Psoas muscle (tissue), 8 donors: ENCODE measurements at regions of chr3 and their contacts with region 1.

Region 1: DNA sequence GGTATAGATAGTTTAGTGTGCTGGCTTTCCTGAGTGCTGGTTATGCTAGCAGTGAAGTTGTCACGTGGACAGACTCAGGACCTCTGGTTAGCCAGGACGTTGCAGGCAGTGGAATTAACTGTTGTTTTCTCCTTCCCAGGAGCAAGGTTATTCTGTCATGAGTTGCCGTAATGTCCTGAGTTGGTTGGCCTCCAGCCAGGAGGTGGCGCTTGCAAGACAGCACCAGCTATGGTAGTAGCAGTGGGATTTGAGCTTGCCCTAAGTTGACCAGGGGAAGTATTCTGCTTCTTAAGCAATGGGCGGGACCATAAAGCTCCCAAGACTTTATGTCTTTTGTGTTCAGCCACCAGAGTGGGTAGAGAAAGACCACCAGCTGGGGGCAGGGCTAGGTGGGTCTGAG is 240.7 kb upstream of the DNAJC19 start:
- DNase-seq: no peak
- ATAC-seq: no peak
- H3K4me3 ChIP-seq: no peak overlapping the region
- H3K27ac ChIP-seq: no peak overlapping the region
- H3K4me1 ChIP-seq: no peaks in the 10 kb centered on the region
- H3K27me3 ChIP-seq: no peaks in the 10 kb centered on the region
- CTCF ChIP-seq: no peak

Region 2: DNA sequence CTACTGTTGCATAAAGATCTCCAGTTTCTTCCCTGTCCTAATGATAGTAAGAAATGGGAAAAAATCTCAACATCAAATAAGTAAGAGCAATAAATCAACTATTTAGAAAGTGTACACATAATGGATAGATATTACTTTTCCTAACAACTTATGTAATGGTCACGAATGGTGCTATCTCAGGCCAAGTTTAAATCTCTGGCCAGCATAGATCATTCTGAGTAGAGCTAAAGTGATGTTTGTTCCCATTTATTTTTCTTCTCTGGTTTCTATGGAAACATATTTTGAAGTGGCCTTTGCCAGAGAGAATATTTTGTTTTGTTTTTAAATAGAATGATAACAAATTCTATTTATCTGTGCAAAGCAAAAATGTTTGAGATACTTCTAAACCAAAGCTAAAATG is 878.0 kb before region 1 on chr3:
- intact Hi-C with region 1: no loop called
- DNase-seq: no peak
- ATAC-seq: no peak
- H3K4me3 ChIP-seq: no peak overlapping the region
- H3K27ac ChIP-seq: no peak overlapping the region
- H3K4me1 ChIP-seq: no peaks in the 10 kb centered on the region
- H3K27me3 ChIP-seq: no peaks in the 10 kb centered on the region
- CTCF ChIP-seq: no peak

Region 3: DNA sequence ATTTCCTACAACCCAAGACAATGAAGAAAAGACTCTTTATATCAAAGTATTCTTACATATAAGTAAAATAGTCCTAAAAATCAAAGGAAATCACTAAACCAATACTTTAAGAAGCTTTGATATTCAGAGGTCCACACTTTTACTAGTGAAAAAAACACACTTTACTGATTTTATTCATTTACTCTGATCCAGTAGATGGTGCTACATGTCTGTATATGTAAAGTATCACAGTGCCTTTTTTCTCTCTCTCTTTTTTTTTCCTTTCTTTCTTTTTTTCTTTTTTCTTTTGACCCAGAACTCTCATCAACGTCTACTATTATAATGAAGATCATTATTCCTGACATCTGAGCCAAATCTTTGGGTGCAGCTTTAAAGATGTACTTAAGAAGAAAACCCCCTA is 540.2 kb before region 1 on chr3:
- intact Hi-C with region 1: no loop called
- DNase-seq: no peak
- ATAC-seq: no peak
- H3K4me3 ChIP-seq: no peak overlapping the region
- H3K27ac ChIP-seq: no peak overlapping the region
- H3K4me1 ChIP-seq: no peaks in the 10 kb centered on the region
- H3K27me3 ChIP-seq: no peaks in the 10 kb centered on the region
- CTCF ChIP-seq: no peak

Region 4: DNA sequence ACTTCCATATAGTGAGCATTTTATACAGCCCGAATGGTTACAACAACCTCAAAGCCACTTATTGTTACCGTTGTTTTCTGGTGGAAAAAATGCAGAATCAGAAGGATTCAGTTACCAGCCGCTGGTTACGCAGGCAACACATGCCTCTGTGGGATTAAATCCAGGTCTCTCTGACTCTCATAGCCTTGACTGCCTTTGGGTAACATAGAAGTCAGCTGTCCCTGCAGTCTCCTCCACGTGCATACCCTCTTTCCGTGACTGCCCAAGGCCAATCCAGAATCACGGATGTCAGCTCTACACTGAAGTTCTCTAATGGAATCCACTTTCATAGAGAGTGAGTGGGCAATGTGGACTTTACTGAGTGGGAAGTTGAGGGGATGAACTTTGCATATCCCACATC is 51.3 kb before region 1 on chr3:
- intact Hi-C with region 1: no loop called
- DNase-seq: no peak
- ATAC-seq: no peak
- H3K4me3 ChIP-seq: no peak overlapping the region
- H3K27ac ChIP-seq: no peak overlapping the region
- H3K4me1 ChIP-seq: no peaks in the 10 kb centered on the region
- H3K27me3 ChIP-seq: no peaks in the 10 kb centered on the region
- CTCF ChIP-seq: no peak

Region 5: DNA sequence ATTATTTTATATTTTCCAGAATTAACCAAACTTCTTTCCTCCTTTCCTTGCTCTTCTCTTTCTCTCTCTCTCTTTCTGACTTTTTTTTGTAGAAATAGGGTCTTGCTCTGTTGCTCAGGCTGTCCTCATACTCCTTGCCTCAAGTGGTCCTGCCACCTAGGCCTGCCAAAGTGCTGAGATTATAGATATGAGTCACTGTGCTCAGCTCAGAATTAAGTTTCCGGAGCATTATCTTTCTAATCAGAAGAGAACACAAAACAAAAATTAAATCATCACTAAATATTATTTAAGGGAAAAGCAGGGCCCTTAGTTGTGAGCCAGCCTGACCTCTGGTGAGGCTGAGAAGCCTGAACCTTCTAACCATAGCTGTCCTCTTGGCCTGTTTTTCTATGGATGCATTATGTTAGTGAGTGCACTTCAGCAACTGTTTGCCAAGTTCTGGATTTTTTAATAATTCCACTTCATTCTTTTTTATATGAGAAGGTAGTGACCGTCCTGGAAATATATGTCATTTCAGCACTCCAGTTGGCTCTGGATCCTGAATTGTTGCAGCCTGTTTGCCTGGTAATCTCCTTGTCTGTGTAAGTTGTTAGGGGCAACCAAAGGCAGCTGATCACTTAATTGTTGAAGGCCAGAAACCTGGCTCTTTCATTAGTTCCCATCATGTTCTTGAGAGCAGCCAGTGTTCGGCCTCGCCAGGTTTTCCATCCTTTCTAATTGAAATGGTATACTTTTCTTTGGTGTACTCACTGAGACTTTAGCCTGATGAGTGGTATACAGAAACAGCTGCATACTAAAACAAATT is 649.9 kb after region 1 on chr3:
- intact Hi-C with region 1: loop called in 1 of 2 experiments (anchors 10 kb)
- DNase-seq: no peak
- ATAC-seq: no peak
- H3K4me3 ChIP-seq: no peak overlapping the region
- H3K27ac ChIP-seq: no peak overlapping the region
- H3K4me1 ChIP-seq: no peaks in the 10 kb centered on the region
- H3K27me3 ChIP-seq: no peaks in the 10 kb centered on the region
- CTCF ChIP-seq: no peak